HepG2 (cell line): ENCODE measurements at regions of chr17 and their contacts with region 1.

Region 1: DNA sequence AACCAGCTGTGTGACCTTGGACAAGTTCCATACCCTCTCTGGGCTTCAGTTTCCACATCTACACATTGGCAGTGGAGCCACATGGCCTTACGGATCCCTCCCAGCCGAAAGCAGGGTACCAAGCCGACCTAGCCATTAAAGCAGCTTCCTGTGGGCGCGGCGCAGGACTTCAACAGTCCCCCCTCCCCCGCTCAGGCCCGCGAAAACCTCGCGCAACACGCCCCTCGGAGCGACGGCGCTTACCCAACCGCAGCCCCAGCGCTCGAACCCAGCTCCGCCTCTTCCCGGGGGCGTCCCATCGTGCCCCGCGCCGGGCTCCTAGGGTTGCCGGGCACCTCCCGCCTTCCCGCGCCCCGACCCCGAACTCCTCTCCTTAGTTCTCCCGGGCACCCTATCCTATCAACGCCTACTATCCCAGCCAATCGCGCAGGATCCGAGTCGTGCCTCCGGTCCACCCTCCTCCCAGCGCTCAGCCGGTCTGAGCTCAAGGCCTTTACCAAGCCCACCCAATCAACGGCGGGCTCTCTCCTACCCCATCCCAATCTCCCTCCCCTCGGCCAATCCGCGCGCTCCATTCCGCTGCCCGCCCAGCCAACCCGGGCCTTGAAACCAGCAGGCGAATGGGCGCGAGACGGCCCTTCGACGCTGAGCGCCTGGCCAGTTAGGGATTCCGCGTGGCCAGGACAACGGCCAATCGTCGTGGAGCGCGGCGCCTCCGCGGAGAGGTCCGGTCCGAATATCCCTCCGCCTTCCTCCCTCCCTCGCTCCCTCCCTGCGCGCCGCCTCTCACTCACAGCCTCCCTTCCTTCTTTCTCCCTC is at the start of gene KPNB1:
- DNase-seq: peak; percentile 100
- ATAC-seq: peak; percentile 93
- H3K4me3 ChIP-seq: peak within 1 kb of the TSS; percentile 68 to 94 (median 83)
- H3K27ac ChIP-seq: peak within 1 kb of the TSS; percentile 77
- H3K4me1 ChIP-seq: peaks cover 52% of the 10 kb centered on the region
- H3K27me3 ChIP-seq: no peaks in the 10 kb centered on the region; a peak in 1 of 5 replicates
- CTCF ChIP-seq: peak; percentile 31
- EP300 ChIP-seq: peak; percentile 45 to 75; a peak in 3 of 4 replicates
- POLR2A ChIP-seq: peak; percentile 56 to 77
- RAD21 ChIP-seq: peak; percentile 41
- total RNA-seq, gene KPNB1: 424 and 443 TPM in 2 replicates

Region 2: GRCh38 chr17:47624727-47625068 is 24.7 kb before region 1 on chr17:
- CTCF ChIA-PET with region 1: no interaction called
- POLR2A ChIA-PET with region 1: interaction called, 10 read pairs
- in situ Hi-C with region 1: no loop called
- intact Hi-C with region 1: loop called (anchors 1 kb)
- DNase-seq: no peak
- ATAC-seq: peak; percentile 56
- H3K4me3 ChIP-seq: no peak overlapping the region
- H3K27ac ChIP-seq: no peak overlapping the region
- H3K4me1 ChIP-seq: peaks cover 7% of the 10 kb centered on the region; the same call in 1 of the 2 replicates
- H3K27me3 ChIP-seq: no peaks in the 10 kb centered on the region
- CTCF ChIP-seq: no peak
- EP300 ChIP-seq: no peak
- POLR2A ChIP-seq: no peak
- RAD21 ChIP-seq: no peak

Region 3: GRCh38 chr17:47663912-47664625 is 14.7 kb after region 1 on chr17:
- CTCF ChIA-PET with region 1: no interaction called
- POLR2A ChIA-PET with region 1: interaction called, 59 read pairs
- in situ Hi-C with region 1: no loop called
- intact Hi-C with region 1: loop called (anchors 2 kb)
- DNase-seq: peak; percentile 63
- ATAC-seq: peak; percentile 86
- H3K4me3 ChIP-seq: no peak overlapping the region
- H3K27ac ChIP-seq: no peak overlapping the region
- H3K4me1 ChIP-seq: no peaks in the 10 kb centered on the region
- H3K27me3 ChIP-seq: no peaks in the 10 kb centered on the region
- CTCF ChIP-seq: peak; percentile 87
- EP300 ChIP-seq: no peak
- POLR2A ChIP-seq: no peak
- RAD21 ChIP-seq: no peak

Region 4: GRCh38 chr17:47687748-47688147 is 38.4 kb after region 1 on chr17:
- CTCF ChIA-PET with region 1: no interaction called
- POLR2A ChIA-PET with region 1: interaction called, 22 read pairs
- in situ Hi-C with region 1: no loop called
- intact Hi-C with region 1: loop called (anchors 5 kb)
- DNase-seq: no peak
- ATAC-seq: peak; percentile 39
- H3K4me3 ChIP-seq: no peak overlapping the region
- H3K27ac ChIP-seq: peak overlapping the region; percentile 49
- H3K4me1 ChIP-seq: peaks cover 51% of the 10 kb centered on the region
- H3K27me3 ChIP-seq: no peaks in the 10 kb centered on the region
- CTCF ChIP-seq: no peak
- EP300 ChIP-seq: no peak
- POLR2A ChIP-seq: no peak; a peak in 1 of 4 replicates
- RAD21 ChIP-seq: no peak

Region 5: DNA sequence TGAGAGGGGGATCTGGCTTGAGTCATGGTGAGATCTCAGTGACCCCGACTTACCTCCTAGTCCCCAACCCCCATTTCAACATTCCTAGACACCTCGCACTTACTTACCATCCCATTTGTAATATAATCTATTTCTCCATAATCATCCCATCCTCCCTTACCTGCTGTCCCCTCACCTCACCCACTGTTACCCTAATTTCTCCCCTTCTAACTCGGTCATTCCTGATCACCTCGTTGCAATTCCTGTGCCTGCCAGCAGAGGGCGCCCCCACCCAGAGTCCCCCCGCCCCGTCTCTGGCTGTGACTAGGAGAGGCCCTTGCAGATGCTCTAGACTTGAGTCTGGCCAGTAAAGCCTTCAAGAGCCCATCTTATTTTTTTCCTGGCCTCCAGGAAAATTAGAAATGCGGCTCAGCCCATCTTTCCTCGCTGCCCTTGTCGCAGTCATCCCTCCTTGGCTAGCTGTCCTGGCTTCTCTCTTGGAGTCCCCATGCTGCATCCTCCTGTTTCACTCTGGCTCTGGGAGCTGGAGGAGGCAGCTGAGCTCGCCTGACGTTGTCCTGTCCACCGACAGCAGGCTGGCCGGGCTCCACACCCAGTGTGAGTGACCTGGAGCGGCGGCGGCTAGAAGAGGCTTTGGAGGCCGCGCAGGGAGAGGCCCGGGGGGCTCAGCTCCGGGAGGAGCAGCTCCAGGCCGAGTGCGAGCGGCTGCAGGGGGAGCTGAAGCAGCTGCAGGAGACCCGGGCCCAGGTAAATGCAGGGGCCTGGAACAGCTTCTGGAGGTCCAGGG is 49.6 kb after region 1 on chr17:
- CTCF ChIA-PET with region 1: no interaction called
- POLR2A ChIA-PET with region 1: interaction called, 22 read pairs
- in situ Hi-C with region 1: no loop called
- intact Hi-C with region 1: no loop called
- DNase-seq: no peak
- ATAC-seq: peak; percentile 51
- H3K4me3 ChIP-seq: no peak overlapping the region
- H3K27ac ChIP-seq: no peak overlapping the region
- H3K4me1 ChIP-seq: peaks cover 18% of the 10 kb centered on the region
- H3K27me3 ChIP-seq: no peaks in the 10 kb centered on the region
- CTCF ChIP-seq: peak; percentile 87
- EP300 ChIP-seq: no peak
- POLR2A ChIP-seq: no peak
- RAD21 ChIP-seq: peak; percentile 55; the same call in 1 of the 2 replicates